ENCODE measurements at regions of chr21 and their contacts with region 1.

Region 1: DNA sequence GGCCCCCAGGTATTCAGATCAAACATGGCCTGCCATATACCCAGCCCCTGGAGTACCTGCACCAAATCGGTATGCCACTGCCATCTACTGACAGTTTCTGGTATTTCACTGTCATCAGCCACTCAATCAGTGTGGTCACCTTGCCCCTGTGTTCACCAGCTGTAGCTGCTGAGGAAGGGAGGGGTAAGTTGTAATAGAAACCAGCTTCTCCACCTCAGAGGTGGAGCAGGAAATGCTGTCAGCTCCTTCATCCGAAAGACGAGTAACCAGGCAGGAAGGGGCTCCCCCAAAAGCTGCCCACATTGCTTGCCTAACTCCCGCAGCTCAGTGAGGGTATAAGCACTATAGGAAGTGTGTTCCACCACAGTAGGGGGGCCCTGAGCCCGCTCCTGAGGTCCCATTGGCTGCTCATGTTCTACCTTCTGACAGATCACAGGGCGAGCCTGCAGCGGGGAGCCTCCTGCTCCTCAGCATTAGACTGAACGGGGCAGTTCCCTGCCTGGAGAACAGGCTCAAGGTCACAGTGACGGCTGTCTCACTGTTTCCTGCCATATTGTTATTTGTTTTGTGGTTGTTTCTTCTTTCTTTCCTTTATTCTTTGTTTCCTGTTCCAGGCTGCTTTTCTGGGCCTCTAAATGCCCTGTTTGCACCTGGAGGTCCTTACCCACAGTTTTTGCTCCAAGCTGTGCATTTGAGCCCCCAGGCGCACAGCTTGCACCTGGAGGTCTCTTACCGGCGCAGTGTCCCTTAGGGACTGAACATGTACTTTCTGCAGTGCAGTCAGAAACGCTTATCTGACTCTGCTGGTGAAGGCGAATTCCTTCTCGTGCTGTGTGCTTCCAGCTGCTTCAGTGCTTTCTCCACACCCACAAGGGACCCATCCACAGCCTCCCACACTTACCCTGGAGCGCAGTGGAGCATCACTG is 1638.3 kb downstream of the MRPL39 start:
- DNase-seq: peak; percentile 46
- ATAC-seq: peak; percentile 94
- H3K4me3 ChIP-seq: no peak overlapping the region
- H3K27ac ChIP-seq: no peak overlapping the region
- H3K4me1 ChIP-seq: no peaks in the 10 kb centered on the region
- H3K27me3 ChIP-seq: no peaks in the 10 kb centered on the region
- CTCF ChIP-seq: peak; percentile 59 to 73 (median 59); a peak in 5 of 6 replicates
- EP300 ChIP-seq: no peak
- POLR2A ChIP-seq: no peak
- RAD21 ChIP-seq: peak; percentile 57

Region 2: GRCh38 chr21:23131171-23131570 is 837.8 kb before region 1 on chr21:
- CTCF ChIA-PET with region 1: no interaction called
- POLR2A ChIA-PET with region 1: no interaction called
- RAD21 ChIA-PET with region 1: no interaction called
- SMC1A ChIA-PET with region 1: no interaction called
- in situ Hi-C with region 1: no loop called
- intact Hi-C with region 1: loop called (anchors 5 kb)
- DNase-seq: no peak
- ATAC-seq: no peak
- H3K4me3 ChIP-seq: no peak overlapping the region
- H3K27ac ChIP-seq: no peak overlapping the region
- H3K4me1 ChIP-seq: no peaks in the 10 kb centered on the region
- H3K27me3 ChIP-seq: no peaks in the 10 kb centered on the region
- CTCF ChIP-seq: 0 out of 6 replicates have a peak, but pooled peaks of 1 of the 3 experiments have one; percentile 13
- EP300 ChIP-seq: no peak
- POLR2A ChIP-seq: no peak
- RAD21 ChIP-seq: no peak

Region 3: DNA sequence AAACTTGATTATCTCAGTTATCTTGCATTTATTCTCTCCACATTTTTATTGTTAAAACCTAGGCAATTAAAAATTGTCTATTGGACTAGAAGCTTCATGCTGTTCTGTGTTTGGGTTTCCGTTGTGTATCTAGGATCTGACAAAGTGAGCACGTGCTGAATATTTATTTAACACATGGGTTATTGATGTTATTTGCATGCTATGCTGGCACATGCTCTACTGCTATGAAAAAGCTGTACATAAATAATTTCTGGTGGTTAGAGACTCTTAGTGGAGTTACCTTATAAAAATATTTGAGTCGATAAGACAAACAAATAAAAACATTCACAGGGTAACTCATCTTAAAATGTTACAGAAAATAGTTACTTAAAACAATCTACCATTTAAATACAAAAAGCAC is 131.4 kb before region 1 on chr21:
- CTCF ChIA-PET with region 1: no interaction called
- POLR2A ChIA-PET with region 1: no interaction called
- RAD21 ChIA-PET with region 1: no interaction called
- SMC1A ChIA-PET with region 1: no interaction called
- in situ Hi-C with region 1: no loop called
- intact Hi-C with region 1: no loop called
- DNase-seq: no peak
- ATAC-seq: no peak
- H3K4me3 ChIP-seq: no peak overlapping the region
- H3K27ac ChIP-seq: no peak overlapping the region
- H3K4me1 ChIP-seq: no peaks in the 10 kb centered on the region
- H3K27me3 ChIP-seq: no peaks in the 10 kb centered on the region
- CTCF ChIP-seq: no peak
- EP300 ChIP-seq: no peak
- POLR2A ChIP-seq: no peak
- RAD21 ChIP-seq: no peak

Region 4: GRCh38 chr21:23853796-23854379 is 115.1 kb before region 1 on chr21:
- CTCF ChIA-PET with region 1: interaction called, 10 read pairs
- POLR2A ChIA-PET with region 1: no interaction called
- RAD21 ChIA-PET with region 1: no interaction called
- SMC1A ChIA-PET with region 1: no interaction called
- in situ Hi-C with region 1: no loop called
- intact Hi-C with region 1: loop called (anchors 1 kb)
- DNase-seq: no peak
- ATAC-seq: peak; percentile 64
- H3K4me3 ChIP-seq: no peak overlapping the region
- H3K27ac ChIP-seq: no peak overlapping the region
- H3K4me1 ChIP-seq: no peaks in the 10 kb centered on the region
- H3K27me3 ChIP-seq: no peaks in the 10 kb centered on the region
- CTCF ChIP-seq: peak; percentile 19 to 57 (median 27); a peak in 4 of 6 replicates
- EP300 ChIP-seq: no peak
- POLR2A ChIP-seq: no peak
- RAD21 ChIP-seq: no peak

Region 5: GRCh38 chr21:23936224-23936623 is 32.8 kb before region 1 on chr21:
- CTCF ChIA-PET with region 1: no interaction called
- POLR2A ChIA-PET with region 1: no interaction called
- RAD21 ChIA-PET with region 1: no interaction called
- SMC1A ChIA-PET with region 1: interaction called, 5 read pairs
- in situ Hi-C with region 1: no loop called
- intact Hi-C with region 1: loop called (anchors 2 kb)
- DNase-seq: no peak
- ATAC-seq: no peak
- H3K4me3 ChIP-seq: no peak overlapping the region
- H3K27ac ChIP-seq: no peak overlapping the region
- H3K4me1 ChIP-seq: no peaks in the 10 kb centered on the region
- H3K27me3 ChIP-seq: no peaks in the 10 kb centered on the region
- CTCF ChIP-seq: peak; percentile 22 to 37 (median 25); a peak in 3 of 6 replicates
- EP300 ChIP-seq: no peak
- POLR2A ChIP-seq: no peak
- RAD21 ChIP-seq: no peak

Region 6: DNA sequence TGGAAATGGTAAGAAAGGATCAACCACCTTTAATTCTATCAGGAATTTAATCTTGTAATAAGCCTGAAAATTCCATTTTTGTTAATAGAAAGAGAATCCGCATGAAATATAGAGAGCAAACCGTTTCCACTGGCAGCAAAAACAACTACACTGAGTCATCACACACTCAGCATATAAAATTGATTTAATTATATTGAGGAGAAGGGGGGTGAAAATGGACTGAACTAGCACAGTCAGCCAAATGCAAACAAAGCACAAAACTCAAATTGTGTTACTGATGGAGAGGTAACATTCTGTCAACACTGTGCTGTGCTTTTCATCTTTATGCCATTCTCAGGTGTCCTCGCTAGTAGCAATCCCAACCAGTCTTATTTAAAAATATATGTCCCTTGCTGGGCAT is 54.4 kb after region 1 on chr21:
- CTCF ChIA-PET with region 1: no interaction called
- POLR2A ChIA-PET with region 1: no interaction called
- RAD21 ChIA-PET with region 1: no interaction called
- SMC1A ChIA-PET with region 1: no interaction called
- in situ Hi-C with region 1: no loop called
- intact Hi-C with region 1: no loop called
- DNase-seq: no peak
- ATAC-seq: no peak
- H3K4me3 ChIP-seq: no peak overlapping the region
- H3K27ac ChIP-seq: no peak overlapping the region
- H3K4me1 ChIP-seq: no peaks in the 10 kb centered on the region
- H3K27me3 ChIP-seq: no peaks in the 10 kb centered on the region
- CTCF ChIP-seq: no peak
- EP300 ChIP-seq: no peak
- POLR2A ChIP-seq: no peak
- RAD21 ChIP-seq: no peak